ENCODE measurements at regions of chr15 and their contacts with region 1.

Region 1: GRCh38 chr15:95304151-95304946 is 1026.2 kb upstream of the NR2F2 start:
- DNase-seq: no peak
- ATAC-seq: peak; percentile 67

Region 2: DNA sequence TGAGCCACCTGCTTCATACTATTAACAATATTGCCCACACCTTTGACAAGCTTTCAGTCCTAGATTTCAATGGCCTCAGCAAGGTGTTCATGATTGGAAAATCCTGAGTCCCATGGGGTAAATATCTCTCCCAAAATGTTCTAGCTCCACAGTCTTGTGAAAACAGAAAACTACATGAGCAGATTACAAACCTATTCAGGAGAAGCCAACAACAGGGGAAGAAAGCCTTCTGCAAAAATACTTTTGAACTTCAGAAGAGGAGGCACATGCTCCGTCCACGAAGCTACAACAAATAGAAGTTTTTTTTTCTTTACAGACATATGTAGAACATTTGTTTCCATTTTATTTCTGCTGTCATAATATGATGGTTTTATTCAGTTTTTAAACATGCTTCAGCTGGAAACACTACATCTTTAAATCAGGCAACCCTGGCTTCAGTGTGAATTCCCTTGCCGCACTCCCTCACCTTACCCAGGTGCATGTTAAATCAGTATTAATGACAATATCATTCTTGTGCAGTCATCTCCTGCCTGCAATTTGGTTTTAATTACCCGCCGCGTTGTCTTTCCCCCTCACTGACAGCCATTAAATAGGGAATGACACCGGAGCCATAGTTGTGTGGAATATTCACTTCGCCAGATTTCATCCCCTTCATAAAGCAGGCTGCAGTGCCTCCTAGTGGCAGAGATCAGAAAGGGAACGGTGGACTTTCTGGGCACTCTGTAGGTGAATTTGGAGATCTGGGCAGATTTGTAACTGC is 1930.7 kb after region 1 on chr15:
- intact Hi-C with region 1: loop called (anchors 5 kb)
- DNase-seq: peak; percentile 7
- ATAC-seq: no peak

Measured in Right ventricle myocardium inferior (tissue), 1 donor.